Cardiac septum (tissue), 1 donor: ENCODE measurements at regions of chr3 and their contacts with region 1.

Region 1: GRCh38 chr3:114686621-114687020 is 392.8 kb downstream of the TIGIT start:
- DNase-seq: no peak

Region 2: DNA sequence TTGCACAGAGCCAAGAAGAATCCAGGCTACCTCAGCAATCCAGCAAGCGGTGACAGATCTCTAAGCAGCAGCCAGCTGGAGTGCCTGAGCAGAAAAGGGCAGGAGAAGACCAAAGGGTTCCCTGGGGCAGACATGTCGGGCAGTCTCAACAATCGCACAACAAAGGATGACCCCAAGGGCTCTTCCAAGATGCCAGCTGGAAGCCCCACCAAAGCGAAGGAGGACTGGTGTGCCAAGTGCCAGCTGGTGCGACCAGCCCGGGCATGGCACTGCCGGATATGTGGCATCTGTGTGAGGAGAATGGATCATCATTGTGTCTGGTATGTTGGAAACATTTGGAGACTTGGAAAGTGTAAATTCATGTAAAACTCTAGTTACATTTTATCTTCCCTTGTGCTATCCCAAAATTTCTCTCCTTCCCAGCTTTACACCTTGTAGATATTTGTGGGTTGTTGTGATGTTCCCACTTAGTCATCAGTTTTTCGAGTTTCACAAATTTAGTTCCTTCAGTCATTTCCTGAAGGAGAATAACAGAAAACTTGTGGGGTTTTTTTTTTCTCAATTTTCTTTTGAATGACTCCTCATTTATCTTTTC is 732.4 kb before region 1 on chr3:
- intact Hi-C with region 1: no loop called
- DNase-seq: no peak

Region 3: GRCh38 chr3:114809668-114810413 is 123.2 kb after region 1 on chr3:
- intact Hi-C with region 1: loop called (anchors 10 kb)
- DNase-seq: no peak